MCF 10A (cell line): ENCODE measurements at regions of chr10 and their contacts with region 1.

Region 1: DNA sequence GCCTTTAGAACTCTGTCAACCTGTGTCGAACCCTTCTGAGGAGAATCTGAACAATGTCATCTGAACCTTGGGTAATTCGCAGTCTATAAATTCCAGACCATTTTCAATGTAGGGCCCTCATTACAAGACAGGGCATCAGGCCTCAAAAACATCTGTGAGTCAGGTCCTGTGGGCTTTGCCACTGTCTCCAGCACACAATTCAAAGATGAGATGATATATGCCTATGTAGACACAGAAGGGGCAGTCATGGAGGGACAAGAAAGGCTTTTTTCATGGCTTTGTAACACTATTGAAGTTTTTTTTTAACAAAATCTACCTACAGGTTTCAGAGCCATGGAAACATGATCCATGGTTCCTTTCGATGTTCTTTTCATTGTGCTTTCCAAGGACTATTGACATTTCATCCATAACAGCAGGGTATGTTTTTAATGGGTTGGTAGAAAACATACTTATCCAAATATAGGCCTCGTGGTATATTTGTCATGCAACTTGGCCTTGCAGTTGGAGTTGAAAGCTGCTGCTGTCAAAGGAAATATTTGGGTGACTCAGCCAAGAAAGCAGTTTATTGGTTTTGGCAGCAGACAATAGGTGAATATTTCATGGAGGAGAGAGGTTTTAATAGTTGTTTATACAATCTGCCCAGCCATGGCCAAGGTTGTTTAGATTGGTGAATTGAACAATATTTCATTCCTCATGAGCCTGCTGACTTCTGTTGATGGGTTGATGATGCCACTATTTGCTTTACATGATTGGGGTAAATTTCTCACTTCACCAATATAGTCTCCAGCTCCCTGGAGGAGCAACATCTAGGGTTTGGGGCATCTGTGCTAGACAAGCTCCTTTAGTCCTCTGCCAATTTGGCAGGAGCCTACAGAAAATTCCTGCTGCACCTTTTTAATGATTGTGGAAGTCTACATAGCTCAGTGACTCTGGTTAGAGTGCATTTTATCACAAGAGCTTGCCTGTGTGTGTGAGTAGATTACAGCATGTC is 158.4 kb upstream of the TMEM72 start:
- DNase-seq: peak; percentile 89
- H3K4me3 Mint-ChIP-seq: no peak overlapping the region
- H3K27ac Mint-ChIP-seq: peak overlapping the region; percentile 73
- H3K4me1 Mint-ChIP-seq: peaks cover 31% of the 10 kb centered on the region
- H3K27me3 Mint-ChIP-seq: no peaks in the 10 kb centered on the region
- CTCF ChIP-seq: no peak

Region 2: GRCh38 chr10:44706745-44707144 is 46.0 kb before region 1 on chr10:
- CTCF ChIA-PET with region 1: no interaction called
- POLR2A ChIA-PET with region 1: no interaction called
- intact Hi-C with region 1: loop called (anchors 2 kb)
- DNase-seq: peak; percentile 88
- H3K4me3 Mint-ChIP-seq: no peak overlapping the region
- H3K27ac Mint-ChIP-seq: peak overlapping the region; percentile 36
- H3K4me1 Mint-ChIP-seq: peaks cover 29% of the 10 kb centered on the region
- H3K27me3 Mint-ChIP-seq: no peaks in the 10 kb centered on the region
- CTCF ChIP-seq: no peak